T-cell (primary cell): ENCODE measurements at regions of chr17 and their contacts with region 1.

Region 1: GRCh38 chr17:43146649-43147048 is 21.5 kb upstream of the BRCA1 start:
- DNase-seq: no peak
- ATAC-seq: no peak
- H3K4me3 ChIP-seq: no peak overlapping the region
- H3K4me3 Mint-ChIP-seq: no peak overlapping the region
- H3K27ac ChIP-seq: no peak overlapping the region
- H3K27ac Mint-ChIP-seq: no peak overlapping the region
- H3K4me1 ChIP-seq: no peaks in the 10 kb centered on the region
- H3K4me1 Mint-ChIP-seq: no peaks in the 10 kb centered on the region
- H3K27me3 ChIP-seq: no peaks in the 10 kb centered on the region
- H3K27me3 Mint-ChIP-seq: no peaks in the 10 kb centered on the region

Region 2: GRCh38 chr17:42372142-42372541 is 774.5 kb before region 1 on chr17:
- CTCF ChIA-PET with region 1: no interaction called
- POLR2A ChIA-PET with region 1: interaction called in 1 of 2 experiments, 10 read pairs
- DNase-seq: no peak
- ATAC-seq: no peak
- H3K4me3 ChIP-seq: no peak overlapping the region
- H3K4me3 Mint-ChIP-seq: no peak overlapping the region
- H3K27ac ChIP-seq: no peak overlapping the region
- H3K27ac Mint-ChIP-seq: no peak overlapping the region
- H3K4me1 ChIP-seq: peaks cover 0 to 24% of the 10 kb centered on the region in 2 experiments
- H3K4me1 Mint-ChIP-seq: peaks cover 48 to 59% (median 55%) of the 10 kb centered on the region in 3 donors
- H3K27me3 ChIP-seq: no peaks in the 10 kb centered on the region
- H3K27me3 Mint-ChIP-seq: no peaks in the 10 kb centered on the region

Region 3: DNA sequence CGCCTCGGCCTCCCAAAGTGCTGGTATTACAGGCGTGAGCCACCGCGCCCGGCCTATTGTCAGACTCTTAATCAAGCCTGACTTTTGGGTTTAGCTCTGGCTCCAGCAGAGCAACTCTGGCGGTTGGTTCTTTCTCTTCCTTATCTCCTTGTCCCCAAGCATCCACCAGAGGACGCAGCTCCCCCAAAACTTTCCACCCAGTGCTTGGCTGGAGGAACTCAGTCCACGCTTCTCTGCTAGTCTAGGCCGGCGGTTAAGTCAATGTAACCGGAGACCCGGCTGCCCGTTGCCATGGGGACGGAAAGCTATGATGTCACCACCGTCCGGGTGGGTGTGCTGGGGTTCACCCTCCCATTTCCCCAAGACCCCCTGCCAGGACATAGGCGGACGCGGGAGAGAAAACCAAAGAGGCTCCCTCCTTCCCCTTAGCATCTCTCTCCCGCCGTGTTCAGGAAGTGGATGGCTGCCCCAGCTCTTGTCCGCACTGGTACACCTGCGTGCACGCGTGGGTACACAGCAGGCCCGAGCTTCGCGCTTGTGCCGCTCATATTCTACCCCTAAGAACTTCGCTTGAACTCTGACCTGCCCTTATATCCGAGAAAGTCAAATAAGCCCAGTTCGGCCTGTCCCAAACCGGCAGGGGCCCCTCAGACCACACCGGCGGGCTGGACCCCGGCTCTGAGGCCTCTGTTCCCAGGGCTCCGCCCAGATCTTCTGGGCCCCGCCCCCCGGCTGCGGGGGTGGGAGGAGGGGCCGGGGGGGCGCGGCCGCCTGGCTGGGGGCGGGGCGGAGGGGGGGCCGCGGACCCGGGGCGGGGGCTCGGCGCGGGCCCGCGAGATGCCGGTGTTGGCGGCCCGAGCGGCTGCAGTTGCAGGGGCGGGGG is 122.0 kb before region 1 on chr17 and contains the start of gene RND2:
- CTCF ChIA-PET with region 1: no interaction called
- POLR2A ChIA-PET with region 1: no interaction called
- DNase-seq: peak; percentile 52 to 85 (median 71)
- ATAC-seq: peak; percentile 59 to 73 (median 68)
- H3K4me3 ChIP-seq: peak within 1 kb of the TSS; percentile 76 to 84
- H3K4me3 Mint-ChIP-seq: peak within 1 kb of the TSS; percentile 86 to 95 (median 87)
- H3K27ac ChIP-seq: peak within 1 kb of the TSS; percentile 57
- H3K27ac Mint-ChIP-seq: peak within 1 kb of the TSS; percentile 80
- H3K4me1 ChIP-seq: peaks cover 5 to 53% of the 10 kb centered on the region in 2 experiments
- H3K4me1 Mint-ChIP-seq: peaks cover 23 to 34% (median 29%) of the 10 kb centered on the region in 3 donors
- H3K27me3 ChIP-seq: no peaks in the 10 kb centered on the region
- H3K27me3 Mint-ChIP-seq: no peaks in the 10 kb centered on the region
- total RNA-seq, gene RND2: 0.08 to 0.64 (median 0.32) TPM